ENCODE measurements at regions of chr10 and their contacts with region 1.

Region 1: GRCh38 chr10:17228091-17228940 is at the start of gene VIM:
- DNase-seq: peak; percentile 79 to 95 (median 80)
- H3K4me3 ChIP-seq: peak within 1 kb of the TSS; percentile 82 to 91
- H3K4me3 Mint-ChIP-seq: peak within 1 kb of the TSS; percentile 88 to 99 (median 98)
- H3K27ac ChIP-seq: peak within 1 kb of the TSS; percentile 98
- H3K27ac Mint-ChIP-seq: peak within 1 kb of the TSS; percentile 96 to 100 (median 99)
- H3K4me1 ChIP-seq: peaks cover 48% of the 10 kb centered on the region
- H3K4me1 Mint-ChIP-seq: peaks cover 28 to 83% (median 52%) of the 10 kb centered on the region in 4 donors
- H3K27me3 ChIP-seq: no peaks in the 10 kb centered on the region
- H3K27me3 Mint-ChIP-seq: no peaks in the 10 kb centered on the region
- total RNA-seq, gene VIM: 657 to 677 TPM

Region 2: GRCh38 chr10:16828114-16828568 is 400.2 kb before region 1 on chr10:
- CTCF ChIA-PET with region 1: interaction called, 3 read pairs
- POLR2A ChIA-PET with region 1: interaction called, 26 read pairs
- intact Hi-C with region 1: no loop called
- DNase-seq: peak; percentile 67 to 73 (median 71)
- H3K4me3 ChIP-seq: no peak overlapping the region
- H3K4me3 Mint-ChIP-seq: no peak overlapping the region
- H3K27ac ChIP-seq: no peak overlapping the region
- H3K27ac Mint-ChIP-seq: peak overlapping the region in 5 of 7 donors; percentile 15 to 88 (median 68)
- H3K4me1 ChIP-seq: no peaks in the 10 kb centered on the region
- H3K4me1 Mint-ChIP-seq: peaks cover 2 to 6% (median 5%) of the 10 kb centered on the region in 4 donors
- H3K27me3 ChIP-seq: no peaks in the 10 kb centered on the region
- H3K27me3 Mint-ChIP-seq: no peaks in the 10 kb centered on the region

Region 3: DNA sequence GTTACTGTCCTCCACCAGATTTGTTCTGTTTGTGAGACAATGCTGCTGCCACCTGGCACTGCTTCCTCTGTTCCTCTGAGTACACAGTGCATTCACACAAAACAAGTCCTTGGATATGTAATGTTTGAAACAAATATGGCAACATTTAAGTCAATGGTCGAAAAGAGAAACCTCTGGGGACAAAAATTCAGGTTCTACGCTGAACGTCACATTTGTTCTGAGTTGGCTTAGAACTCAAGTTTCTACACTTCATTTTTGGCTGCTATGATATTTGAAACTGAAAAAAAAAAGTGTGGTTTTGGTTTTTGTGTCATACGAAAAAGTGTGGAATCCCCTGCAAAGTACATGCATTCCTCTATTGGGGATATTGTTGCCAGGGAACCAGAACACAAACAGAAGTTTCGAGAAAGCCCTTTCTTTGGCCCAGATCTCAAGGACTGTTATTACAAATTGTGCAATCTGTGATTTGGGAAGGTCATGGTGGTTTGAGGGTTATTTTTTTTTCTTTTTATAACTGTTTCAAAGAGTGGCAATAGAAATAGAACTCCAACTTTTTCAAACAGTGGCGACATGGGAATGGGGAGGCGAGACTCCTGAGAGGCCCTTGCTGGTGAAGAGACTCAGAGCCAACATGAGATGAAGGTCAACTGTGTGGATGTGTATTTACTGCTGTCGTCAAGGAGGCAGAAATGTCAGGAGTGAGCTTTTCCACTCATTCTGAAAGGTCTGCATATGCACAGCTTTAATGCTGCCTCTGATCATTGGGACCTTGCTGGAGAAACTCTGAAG is 226.2 kb before region 1 on chr10:
- CTCF ChIA-PET with region 1: no interaction called
- POLR2A ChIA-PET with region 1: interaction called, 15 read pairs
- intact Hi-C with region 1: no loop called
- DNase-seq: peak; percentile 54 to 87 (median 66)
- H3K4me3 ChIP-seq: no peak overlapping the region
- H3K4me3 Mint-ChIP-seq: peak overlapping the region; percentile 7 to 79 (median 72)
- H3K27ac ChIP-seq: peak overlapping the region; percentile 82
- H3K27ac Mint-ChIP-seq: peak overlapping the region; percentile 95 to 99 (median 98)
- H3K4me1 ChIP-seq: peaks cover 38% of the 10 kb centered on the region
- H3K4me1 Mint-ChIP-seq: peaks cover 29 to 50% (median 38%) of the 10 kb centered on the region in 4 donors
- H3K27me3 ChIP-seq: no peaks in the 10 kb centered on the region
- H3K27me3 Mint-ChIP-seq: no peaks in the 10 kb centered on the region

Region 4: DNA sequence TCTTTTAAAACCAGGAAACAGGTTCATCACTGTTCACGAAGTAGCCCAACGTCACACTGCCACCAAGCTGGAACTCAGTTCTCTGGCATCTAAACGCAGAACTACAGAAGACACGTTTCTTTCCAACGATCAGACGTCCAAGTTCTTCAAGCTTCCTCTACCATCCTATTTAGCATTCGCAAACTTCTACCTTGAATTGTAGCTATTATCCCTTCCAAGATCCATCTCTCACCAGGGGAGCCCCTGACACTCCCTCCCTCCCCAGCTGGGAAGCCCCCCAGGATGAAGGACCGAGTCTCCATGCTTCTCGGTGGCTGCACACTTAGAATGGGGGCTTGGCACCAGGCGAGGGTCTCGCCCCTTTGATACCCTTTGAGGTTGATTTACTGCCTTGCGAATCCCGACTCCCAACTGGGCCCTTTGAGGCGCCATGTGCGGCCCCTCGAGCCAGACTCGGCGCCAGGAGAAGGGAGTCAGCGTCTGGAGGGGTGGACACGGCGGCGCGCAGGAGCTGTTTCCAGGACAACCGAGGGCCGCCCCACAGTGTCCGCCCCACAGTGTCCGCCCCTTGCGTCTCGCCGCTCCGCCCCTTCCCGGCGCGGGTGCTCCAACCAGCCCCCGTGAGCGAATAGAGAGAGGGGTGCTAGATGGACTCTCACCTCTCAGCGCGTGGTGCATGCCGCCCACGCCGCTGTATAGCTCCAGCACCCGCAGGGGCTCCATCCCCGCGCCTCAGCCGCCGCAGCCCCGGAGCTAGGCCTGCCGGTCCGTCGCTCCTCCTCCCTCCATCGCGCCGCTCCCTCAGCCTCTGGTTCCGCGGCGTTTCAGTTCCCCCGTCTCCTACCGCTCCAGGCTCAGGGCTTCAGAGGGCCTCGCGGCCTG is 27.2 kb before region 1 on chr10 and contains the start of gene TRDMT1:
- CTCF ChIA-PET with region 1: interaction called, 60 read pairs
- POLR2A ChIA-PET with region 1: interaction called, 483 read pairs
- intact Hi-C with region 1: loop called (anchors 1 kb)
- DNase-seq: peak; percentile 79 to 84 (median 80)
- H3K4me3 ChIP-seq: peak within 1 kb of the TSS; percentile 72 to 89
- H3K4me3 Mint-ChIP-seq: peak within 1 kb of the TSS; percentile 91 to 98 (median 95)
- H3K27ac ChIP-seq: peak within 1 kb of the TSS; percentile 95
- H3K27ac Mint-ChIP-seq: peak within 1 kb of the TSS; percentile 98 to 99 (median 99)
- H3K4me1 ChIP-seq: peaks cover 27% of the 10 kb centered on the region
- H3K4me1 Mint-ChIP-seq: peaks cover 22 to 56% (median 40%) of the 10 kb centered on the region in 4 donors
- H3K27me3 ChIP-seq: no peaks in the 10 kb centered on the region
- H3K27me3 Mint-ChIP-seq: no peaks in the 10 kb centered on the region
- total RNA-seq, gene TRDMT1: 20.2 to 21.3 TPM

Region 5: DNA sequence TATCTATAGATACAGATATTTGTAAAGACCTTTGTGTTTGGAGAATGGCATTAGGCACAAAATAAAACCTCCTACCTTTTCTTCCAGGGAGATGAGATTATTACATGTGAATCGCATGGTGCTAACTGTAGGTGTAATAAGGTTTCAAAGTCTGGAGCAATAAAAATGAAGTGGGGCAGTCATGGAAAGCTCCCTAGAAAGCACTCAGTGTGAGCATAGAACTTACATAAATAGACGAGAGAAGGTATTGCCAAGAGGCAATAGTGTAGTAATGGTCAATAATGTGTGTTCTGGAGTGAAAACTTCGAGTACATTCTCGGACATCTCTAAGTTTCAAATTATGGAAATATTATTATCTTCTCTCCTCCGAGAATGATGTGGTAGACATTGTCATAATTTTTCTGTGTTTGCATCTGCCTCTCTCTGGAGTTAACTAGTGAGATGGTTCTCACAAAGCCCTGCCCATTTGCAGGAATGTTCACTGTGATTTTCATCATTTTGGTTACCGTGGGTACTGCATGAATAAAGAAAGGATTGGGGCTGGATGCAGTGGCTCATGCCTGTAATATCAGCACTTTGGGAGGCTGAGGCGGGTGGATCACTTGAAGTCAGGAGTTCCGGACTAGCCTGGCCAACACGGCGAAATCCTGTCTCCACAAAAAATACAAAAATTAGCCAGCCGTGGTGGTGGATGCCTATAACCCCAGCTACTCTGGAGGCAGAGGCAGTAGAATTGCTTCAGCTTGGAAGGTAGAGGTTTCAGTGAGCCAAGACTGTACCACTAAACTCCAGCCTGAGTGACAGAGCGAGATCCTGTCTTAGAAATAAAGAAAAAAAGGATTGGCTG is 10.4 kb after region 1 on chr10:
- CTCF ChIA-PET with region 1: interaction called, 6 read pairs
- POLR2A ChIA-PET with region 1: interaction called, 24 read pairs
- intact Hi-C with region 1: no loop called
- DNase-seq: no peak
- H3K4me3 ChIP-seq: no peak overlapping the region
- H3K4me3 Mint-ChIP-seq: no peak overlapping the region
- H3K27ac ChIP-seq: no peak overlapping the region
- H3K27ac Mint-ChIP-seq: peak overlapping the region; percentile 29 to 99 (median 68)
- H3K4me1 ChIP-seq: peaks cover 26% of the 10 kb centered on the region
- H3K4me1 Mint-ChIP-seq: peaks cover 20 to 39% (median 28%) of the 10 kb centered on the region in 4 donors
- H3K27me3 ChIP-seq: no peaks in the 10 kb centered on the region
- H3K27me3 Mint-ChIP-seq: no peaks in the 10 kb centered on the region

Region 6: GRCh38 chr10:17383801-17384555 is 155.7 kb after region 1 on chr10:
- CTCF ChIA-PET with region 1: no interaction called
- POLR2A ChIA-PET with region 1: no interaction called
- intact Hi-C with region 1: no loop called
- DNase-seq: no peak
- H3K4me3 ChIP-seq: no peak overlapping the region
- H3K4me3 Mint-ChIP-seq: no peak overlapping the region
- H3K27ac ChIP-seq: no peak overlapping the region
- H3K27ac Mint-ChIP-seq: no peak overlapping the region
- H3K4me1 ChIP-seq: no peaks in the 10 kb centered on the region
- H3K4me1 Mint-ChIP-seq: no peaks in the 10 kb centered on the region
- H3K27me3 ChIP-seq: no peaks in the 10 kb centered on the region
- H3K27me3 Mint-ChIP-seq: peaks cover 2 to 3% of the 10 kb centered on the region in 2 donors

Region 7: GRCh38 chr10:17643755-17644484 is 415.6 kb after region 1 on chr10 and contains the start of gene STAM:
- CTCF ChIA-PET with region 1: no interaction called
- POLR2A ChIA-PET with region 1: interaction called, 5 read pairs
- intact Hi-C with region 1: loop called (anchors 1 kb)
- DNase-seq: peak; percentile 95 to 96 (median 96)
- H3K4me3 ChIP-seq: peak within 1 kb of the TSS; percentile 82 to 91
- H3K4me3 Mint-ChIP-seq: peak within 1 kb of the TSS; percentile 95 to 99 (median 98)
- H3K27ac ChIP-seq: peak within 1 kb of the TSS; percentile 93
- H3K27ac Mint-ChIP-seq: peak within 1 kb of the TSS; percentile 100
- H3K4me1 ChIP-seq: peaks cover 53% of the 10 kb centered on the region
- H3K4me1 Mint-ChIP-seq: peaks cover 40 to 69% (median 50%) of the 10 kb centered on the region in 4 donors
- H3K27me3 ChIP-seq: no peaks in the 10 kb centered on the region
- H3K27me3 Mint-ChIP-seq: no peaks in the 10 kb centered on the region
- total RNA-seq, gene STAM: 31.7 to 34.0 TPM

Region 8: DNA sequence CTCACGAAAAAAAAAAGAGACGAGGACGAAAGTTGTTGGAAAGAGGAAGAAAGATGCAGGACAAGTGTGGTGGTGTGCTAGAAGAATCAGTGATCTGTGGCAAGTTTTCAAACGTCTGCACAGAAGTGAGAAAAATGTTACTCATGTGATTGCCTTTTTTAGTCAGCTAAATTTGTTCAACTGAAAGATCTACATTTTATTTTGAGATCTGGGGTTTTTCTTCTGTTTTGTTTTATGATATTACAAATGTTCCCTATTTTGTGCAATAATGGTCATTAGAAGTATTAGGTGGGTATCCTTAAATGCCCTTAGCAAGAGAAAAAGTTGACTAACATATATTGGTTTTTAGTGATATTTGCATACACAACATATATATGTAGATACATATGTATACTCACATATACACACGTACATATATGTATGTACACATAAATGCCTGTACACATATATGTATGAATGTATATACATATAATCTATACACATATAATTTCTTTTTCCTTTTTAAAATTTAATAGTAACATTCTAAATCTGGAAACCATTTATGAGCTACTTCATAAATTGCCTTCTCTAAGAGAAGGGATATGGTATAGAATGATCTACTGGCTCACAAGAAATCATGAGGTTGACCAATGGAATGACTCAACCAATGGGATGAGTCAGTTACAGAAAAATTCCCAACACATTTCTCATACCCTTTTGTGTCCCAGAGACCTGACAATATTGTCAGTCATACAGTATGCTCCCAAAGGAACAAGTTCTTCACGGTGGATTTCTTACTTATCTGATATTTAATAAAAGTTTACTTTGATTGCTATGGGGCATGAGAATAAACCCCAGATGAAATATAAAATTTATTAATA is 761.8 kb after region 1 on chr10:
- CTCF ChIA-PET with region 1: no interaction called
- POLR2A ChIA-PET with region 1: no interaction called
- intact Hi-C with region 1: no loop called
- DNase-seq: no peak
- H3K4me3 ChIP-seq: no peak overlapping the region
- H3K4me3 Mint-ChIP-seq: no peak overlapping the region
- H3K27ac ChIP-seq: no peak overlapping the region
- H3K27ac Mint-ChIP-seq: no peak overlapping the region
- H3K4me1 ChIP-seq: no peaks in the 10 kb centered on the region
- H3K4me1 Mint-ChIP-seq: no peaks in the 10 kb centered on the region
- H3K27me3 ChIP-seq: no peaks in the 10 kb centered on the region
- H3K27me3 Mint-ChIP-seq: peaks cover 1% of the 10 kb centered on the region in 2 donors